ENCODE measurements at regions of chr6 and their contacts with region 1.

Region 1: GRCh38 chr6:32763427-32763826 is at the start of gene HLA-DQB2:
- DNase-seq: no peak
- H3K4me3 ChIP-seq: no peak within 1 kb of the TSS
- H3K27ac ChIP-seq: no peak within 1 kb of the TSS
- H3K4me1 ChIP-seq: no peaks in the 10 kb centered on the region
- H3K27me3 ChIP-seq: no peaks in the 10 kb centered on the region
- CTCF ChIP-seq: no peak
- POLR2A ChIP-seq: no peak
- total RNA-seq, gene HLA-DQB2: 0.62 to 0.79 TPM

Region 2: DNA sequence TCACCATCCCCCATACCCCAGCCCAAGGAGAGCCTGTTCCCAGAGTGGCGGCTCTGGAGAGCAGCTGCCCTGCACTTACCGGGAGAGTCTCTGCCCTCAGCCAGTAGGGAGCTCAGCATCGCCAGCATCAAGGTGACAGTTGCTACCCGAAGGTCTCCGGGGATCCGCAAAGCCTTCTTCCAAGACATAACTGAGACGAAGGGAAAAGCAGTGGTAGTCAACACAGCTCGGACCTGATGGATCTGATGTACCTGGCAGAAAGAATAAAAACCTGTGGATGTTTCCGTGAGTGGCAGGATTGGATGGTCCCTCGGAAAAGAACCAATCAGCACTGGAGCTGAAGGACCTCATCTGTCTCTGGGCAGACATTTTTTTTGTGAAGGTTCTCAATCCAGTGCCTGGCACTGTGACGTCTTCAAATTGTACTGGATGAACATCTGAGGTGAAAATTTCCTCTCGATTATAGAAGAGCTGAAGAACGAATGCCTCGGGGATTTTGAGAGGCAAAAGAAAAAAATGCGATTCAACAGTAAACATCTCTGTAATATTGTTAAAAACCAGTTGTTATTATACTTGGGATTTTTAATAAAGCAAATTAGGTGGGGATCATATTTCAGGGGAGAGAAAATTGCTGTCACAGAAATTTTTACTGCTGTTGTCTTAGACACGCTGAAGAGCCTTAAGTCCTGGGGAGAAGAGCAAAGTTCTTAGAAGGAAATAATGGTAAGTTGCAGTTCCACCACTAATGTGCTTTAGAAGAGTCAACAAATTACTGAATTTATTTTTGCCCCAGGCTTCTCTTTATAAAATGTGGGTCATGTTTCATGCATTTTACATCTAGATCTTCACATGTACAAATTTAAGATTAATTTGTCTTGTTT is 96.8 kb before region 1 on chr6 and contains the start of gene HLA-DQB1:
- intact Hi-C with region 1: loop called (anchors 10 kb)
- DNase-seq: peak; percentile 32
- H3K4me3 ChIP-seq: no peak within 1 kb of the TSS
- H3K27ac ChIP-seq: no peak within 1 kb of the TSS
- H3K4me1 ChIP-seq: no peaks in the 10 kb centered on the region
- H3K27me3 ChIP-seq: no peaks in the 10 kb centered on the region
- CTCF ChIP-seq: no peak
- POLR2A ChIP-seq: no peak
- total RNA-seq, gene HLA-DQB1: 0.08 to 1.7 TPM

Measured in testis (tissue), 5 donors.